ENCODE measurements at regions of chr1 and their contacts with region 1.

Region 1: GRCh38 chr1:26574719-26575251 is 45.2 kb downstream of the RPS6KA1 start:
- DNase-seq: peak in 6 of 10 donors; percentile 22 to 91 (median 46)

Region 2: GRCh38 chr1:26045722-26046248 is 529.0 kb before region 1 on chr1 and contains the start of gene SLC30A2:
- intact Hi-C with region 1: loop called (anchors 5 kb)
- DNase-seq: peak in 2 of 10 donors; percentile 57 to 67

Measured in posterior cingulate gyrus (tissue), 11 donors.